H1 (cell line): ENCODE measurements at regions of chr11 and their contacts with region 1.

Region 1: DNA sequence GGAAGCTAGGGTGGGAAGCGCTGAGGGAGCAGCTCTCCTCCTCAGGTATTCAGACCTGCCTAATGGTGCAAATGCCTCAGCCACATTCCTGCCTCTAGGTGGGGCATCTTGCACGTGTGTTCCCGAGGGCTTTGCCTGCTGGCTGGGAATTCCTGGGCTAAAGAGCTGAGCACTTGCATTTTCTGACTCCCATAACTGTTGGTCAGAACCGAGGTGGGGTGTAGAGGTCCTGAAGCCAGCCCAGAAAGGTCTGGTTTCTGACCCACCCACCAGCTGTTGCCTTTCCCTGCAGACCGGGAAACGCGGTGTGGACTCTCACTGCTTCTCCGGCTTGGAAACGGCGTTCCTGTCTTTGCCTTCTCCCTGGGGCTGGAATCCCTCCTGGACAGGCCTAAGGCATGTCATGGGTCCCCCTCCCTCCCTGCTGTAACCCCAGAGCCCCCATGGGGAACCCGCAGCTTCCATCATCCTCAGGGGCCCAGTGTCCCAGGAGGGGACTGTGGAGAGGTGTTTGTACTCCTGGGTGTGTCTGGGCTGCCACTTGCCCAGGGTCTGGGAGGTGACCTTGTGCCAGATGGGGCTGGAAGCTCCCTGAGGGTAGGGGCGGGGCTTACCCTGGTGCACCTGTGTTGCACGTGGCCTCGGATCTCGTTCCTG is 24.0 kb upstream of the SMIM38 start:
- DNase-seq: peak; percentile 81 to 89
- H3K4me3 ChIP-seq: no peak overlapping the region
- H3K27ac ChIP-seq: no peak overlapping the region
- H3K4me1 ChIP-seq: peaks cover 0 to 6% (median 2%) of the 10 kb centered on the region in 4 experiments; a peak in 4 of 7 replicates
- H3K27me3 ChIP-seq: no peaks in the 10 kb centered on the region; a peak in 1 of 7 replicates
- CTCF ChIP-seq: peak; percentile 91 to 98 (median 97)
- EP300 ChIP-seq: peak in 1 of 2 experiments; percentile 40; a peak in 1 of 3 replicates
- POLR2A ChIP-seq: no peak
- RAD21 ChIP-seq: peak; percentile 91

Region 2: GRCh38 chr11:69055598-69056516 is 75.9 kb before region 1 on chr11:
- CTCF ChIA-PET with region 1: no interaction called
- POLR2A ChIA-PET with region 1: no interaction called
- DNase-seq: no peak
- H3K4me3 ChIP-seq: no peak overlapping the region
- H3K27ac ChIP-seq: no peak overlapping the region
- H3K4me1 ChIP-seq: peaks cover 0 to 3% (median under 1%) of the 10 kb centered on the region in 4 experiments; a peak in 2 of 7 replicates
- H3K27me3 ChIP-seq: no peaks in the 10 kb centered on the region
- CTCF ChIP-seq: no peak
- EP300 ChIP-seq: no peak
- POLR2A ChIP-seq: no peak
- RAD21 ChIP-seq: no peak

Region 3: GRCh38 chr11:69115586-69116560 is 15.9 kb before region 1 on chr11:
- CTCF ChIA-PET with region 1: interaction called, 26 read pairs
- POLR2A ChIA-PET with region 1: interaction called, 13 read pairs
- DNase-seq: no peak
- H3K4me3 ChIP-seq: no peak overlapping the region
- H3K27ac ChIP-seq: no peak overlapping the region
- H3K4me1 ChIP-seq: no peaks in the 10 kb centered on the region; a peak in 1 of 7 replicates
- H3K27me3 ChIP-seq: no peaks in the 10 kb centered on the region; a peak in 1 of 7 replicates
- CTCF ChIP-seq: no peak
- EP300 ChIP-seq: no peak
- POLR2A ChIP-seq: no peak
- RAD21 ChIP-seq: no peak

Region 4: GRCh38 chr11:69145062-69145405 is 13.3 kb after region 1 on chr11:
- CTCF ChIA-PET with region 1: interaction called, 22 read pairs
- POLR2A ChIA-PET with region 1: no interaction called
- DNase-seq: no peak
- H3K4me3 ChIP-seq: no peak overlapping the region
- H3K27ac ChIP-seq: no peak overlapping the region
- H3K4me1 ChIP-seq: no peaks in the 10 kb centered on the region
- H3K27me3 ChIP-seq: no peaks in the 10 kb centered on the region
- CTCF ChIP-seq: no peak
- EP300 ChIP-seq: no peak
- POLR2A ChIP-seq: no peak
- RAD21 ChIP-seq: no peak

Region 5: DNA sequence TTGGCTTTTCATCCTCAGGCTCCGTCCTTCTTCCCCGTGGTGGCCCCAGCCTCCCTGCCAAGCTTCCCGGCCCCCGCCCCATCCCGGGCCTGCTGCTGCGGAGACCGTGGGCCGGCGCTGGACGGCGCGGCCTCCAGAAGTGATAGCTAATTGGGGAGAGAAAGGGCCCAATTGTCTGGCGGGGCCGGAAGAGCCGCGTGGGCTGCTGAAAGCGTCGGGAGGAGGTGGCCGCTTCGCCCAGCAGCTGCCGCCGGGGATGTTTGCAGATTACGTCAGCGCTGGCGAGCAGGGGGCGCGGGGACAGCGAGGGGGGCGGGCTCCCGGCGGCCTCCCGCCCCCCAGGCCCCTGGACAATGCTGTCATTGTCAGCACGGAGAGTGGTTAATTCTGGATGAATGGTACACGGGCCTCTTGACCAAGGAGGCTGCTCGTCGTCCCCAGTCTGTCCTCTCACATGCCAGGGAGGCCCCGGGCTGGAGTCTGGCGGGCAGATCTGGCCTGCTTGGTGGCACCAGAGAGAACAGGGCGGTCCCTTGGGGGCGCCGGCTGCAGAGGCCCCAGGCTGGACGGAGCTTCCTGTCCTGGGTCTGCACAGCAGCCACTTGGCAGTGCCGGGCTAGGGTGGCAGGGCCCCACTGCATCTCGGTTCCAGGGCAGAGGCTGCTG is 25.5 kb after region 1 on chr11:
- CTCF ChIA-PET with region 1: interaction called, 25 read pairs
- POLR2A ChIA-PET with region 1: no interaction called
- DNase-seq: no peak
- H3K4me3 ChIP-seq: no peak overlapping the region
- H3K27ac ChIP-seq: no peak overlapping the region
- H3K4me1 ChIP-seq: peaks cover 0 to 6% (median 3%) of the 10 kb centered on the region in 4 experiments
- H3K27me3 ChIP-seq: no peaks in the 10 kb centered on the region
- CTCF ChIP-seq: no peak
- EP300 ChIP-seq: no peak
- POLR2A ChIP-seq: no peak
- RAD21 ChIP-seq: no peak

Region 6: DNA sequence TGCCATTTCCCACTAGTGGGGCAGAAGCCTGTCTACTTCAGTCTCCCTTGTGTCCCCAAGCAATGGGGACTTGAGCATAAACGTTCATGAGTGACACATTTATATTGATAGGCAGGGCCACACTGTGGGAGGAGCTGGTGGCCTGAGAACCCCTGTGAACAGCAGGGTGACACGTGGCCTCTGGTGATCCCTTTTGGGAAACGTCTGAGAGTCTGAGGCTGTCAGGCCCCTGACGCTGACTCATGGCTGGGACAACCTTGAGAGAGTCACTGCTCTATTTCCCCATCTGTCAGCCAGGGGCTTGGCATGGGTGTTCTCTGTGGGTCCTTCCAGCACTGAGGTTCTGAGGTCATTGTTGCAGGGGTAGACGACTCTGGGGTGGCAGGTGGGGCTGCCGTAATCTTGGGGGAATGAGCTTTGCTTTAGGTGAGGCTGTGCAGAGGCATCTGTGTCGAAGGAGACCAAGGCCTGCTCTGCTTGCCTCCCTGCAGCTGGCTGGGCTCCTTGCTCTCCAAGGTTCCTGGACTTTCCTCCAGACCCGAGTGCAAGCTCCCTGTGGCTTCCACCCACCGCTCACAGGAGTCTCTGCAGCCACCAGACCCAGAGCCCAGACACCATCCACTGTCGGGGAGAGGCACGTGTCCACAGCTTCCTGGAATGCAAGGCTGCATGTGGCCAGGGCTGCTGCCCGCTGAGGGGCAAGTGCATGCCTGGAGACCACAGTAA is 78.7 kb after region 1 on chr11:
- CTCF ChIA-PET with region 1: interaction called, 16 read pairs
- POLR2A ChIA-PET with region 1: no interaction called
- DNase-seq: no peak
- H3K4me3 ChIP-seq: no peak overlapping the region
- H3K27ac ChIP-seq: no peak overlapping the region
- H3K4me1 ChIP-seq: no peaks in the 10 kb centered on the region
- H3K27me3 ChIP-seq: no peaks in the 10 kb centered on the region; a peak in 1 of 7 replicates
- CTCF ChIP-seq: no peak
- EP300 ChIP-seq: no peak
- POLR2A ChIP-seq: no peak
- RAD21 ChIP-seq: no peak

Region 7: GRCh38 chr11:69240332-69241074 is 108.7 kb after region 1 on chr11:
- CTCF ChIA-PET with region 1: interaction called, 17 read pairs
- POLR2A ChIA-PET with region 1: no interaction called
- DNase-seq: no peak
- H3K4me3 ChIP-seq: no peak overlapping the region
- H3K27ac ChIP-seq: no peak overlapping the region
- H3K4me1 ChIP-seq: no peaks in the 10 kb centered on the region
- H3K27me3 ChIP-seq: no peaks in the 10 kb centered on the region
- CTCF ChIP-seq: peak; percentile 48 to 70 (median 60)
- EP300 ChIP-seq: no peak
- POLR2A ChIP-seq: no peak
- RAD21 ChIP-seq: peak; percentile 48 to 66